Right ventricle myocardium inferior (tissue), 1 donor: ENCODE measurements at regions of chr1 and their contacts with region 1.

Region 1: GRCh38 chr1:11641776-11642305 is 12.4 kb downstream of the FBXO2 start:
- DNase-seq: no peak
- ATAC-seq: no peak

Region 2: DNA sequence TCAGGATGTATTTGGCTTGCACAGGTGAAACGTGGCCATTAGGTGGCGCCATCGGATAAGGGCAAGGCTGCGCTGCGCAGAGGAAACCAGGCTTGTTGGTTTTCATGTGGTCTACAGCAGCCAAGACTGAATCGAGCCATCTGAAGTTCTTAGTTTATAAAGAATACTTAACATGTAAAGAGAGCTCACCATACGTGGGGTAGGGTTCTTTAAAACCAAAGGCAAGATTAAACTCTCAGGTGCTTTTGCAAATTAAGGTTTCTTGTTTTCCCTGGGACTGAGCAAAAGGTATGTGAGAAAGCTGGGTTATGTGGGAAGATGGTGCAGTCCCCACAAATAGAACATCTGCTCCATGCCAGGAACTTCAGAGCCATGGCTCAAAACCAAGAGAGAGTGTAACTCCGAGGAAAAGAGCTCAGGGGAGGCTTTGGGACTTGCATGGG is 604.1 kb before region 1 on chr1:
- intact Hi-C with region 1: loop called (anchors 1 kb)
- DNase-seq: peak; percentile 93
- ATAC-seq: peak; percentile 94

Region 3: DNA sequence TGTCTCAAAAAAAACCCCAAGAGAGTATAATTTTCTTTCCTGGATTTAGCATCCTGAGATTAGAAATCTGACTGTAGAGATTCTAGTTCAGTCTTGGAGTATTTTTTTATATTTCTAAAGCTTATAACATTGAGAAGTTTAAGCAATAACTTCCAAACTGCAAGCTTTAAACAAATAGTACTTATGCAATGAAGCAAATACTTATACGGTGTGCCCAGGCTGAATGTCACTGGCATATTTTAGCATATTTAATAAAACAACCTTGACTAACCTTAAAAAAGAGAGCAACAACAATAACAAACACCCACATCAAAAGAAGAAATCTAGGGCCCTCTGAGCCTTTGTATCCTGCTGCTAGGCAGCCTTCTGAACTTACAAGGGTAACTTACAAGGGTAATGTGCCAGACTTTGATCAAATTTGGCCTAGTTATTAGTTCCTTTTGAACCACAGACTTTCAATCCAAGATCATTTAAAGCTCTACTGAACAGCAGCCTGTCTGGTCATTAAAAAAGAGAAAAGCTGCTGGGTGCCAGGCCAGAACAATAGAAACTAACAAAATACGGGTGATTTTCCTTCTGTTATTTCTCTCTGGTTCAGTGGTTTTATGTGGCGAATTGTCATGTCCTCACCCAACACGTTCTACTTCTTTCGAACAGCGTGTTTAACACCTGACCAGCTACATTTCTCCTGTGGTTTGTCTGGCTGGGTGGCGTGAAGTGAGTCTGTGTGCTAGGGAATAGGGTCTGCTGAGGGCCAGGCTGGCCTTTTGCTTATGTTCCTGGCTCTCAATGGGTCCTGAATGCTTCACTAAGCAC is 395.7 kb before region 1 on chr1:
- intact Hi-C with region 1: loop called (anchors 2 kb)
- DNase-seq: no peak
- ATAC-seq: no peak

Region 4: DNA sequence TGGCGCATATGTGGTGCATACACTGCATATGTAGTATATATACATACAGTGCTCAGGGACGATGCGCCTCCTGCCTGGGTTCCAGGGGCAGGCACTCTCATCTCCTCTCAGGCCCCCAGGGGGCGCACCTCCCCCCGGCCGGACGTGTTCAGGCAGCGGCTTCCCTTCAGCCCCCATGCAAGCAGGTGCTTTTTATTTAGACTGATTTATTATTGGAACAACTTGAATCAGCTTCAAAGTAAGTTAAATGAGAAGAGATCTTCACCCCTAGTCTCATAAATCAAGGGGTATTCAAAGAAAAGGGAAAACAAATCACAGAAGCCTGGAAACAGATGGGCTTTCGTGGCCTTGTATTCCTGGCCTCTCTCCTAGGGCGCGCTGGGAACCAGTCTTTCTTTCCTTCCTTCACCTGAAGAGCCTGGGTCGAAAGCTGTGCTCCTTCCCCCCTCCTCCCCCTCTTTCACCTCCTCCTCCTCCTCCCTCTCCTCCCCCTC is 304.2 kb before region 1 on chr1:
- intact Hi-C with region 1: loop called (anchors 2 kb)
- DNase-seq: no peak
- ATAC-seq: no peak

Region 5: DNA sequence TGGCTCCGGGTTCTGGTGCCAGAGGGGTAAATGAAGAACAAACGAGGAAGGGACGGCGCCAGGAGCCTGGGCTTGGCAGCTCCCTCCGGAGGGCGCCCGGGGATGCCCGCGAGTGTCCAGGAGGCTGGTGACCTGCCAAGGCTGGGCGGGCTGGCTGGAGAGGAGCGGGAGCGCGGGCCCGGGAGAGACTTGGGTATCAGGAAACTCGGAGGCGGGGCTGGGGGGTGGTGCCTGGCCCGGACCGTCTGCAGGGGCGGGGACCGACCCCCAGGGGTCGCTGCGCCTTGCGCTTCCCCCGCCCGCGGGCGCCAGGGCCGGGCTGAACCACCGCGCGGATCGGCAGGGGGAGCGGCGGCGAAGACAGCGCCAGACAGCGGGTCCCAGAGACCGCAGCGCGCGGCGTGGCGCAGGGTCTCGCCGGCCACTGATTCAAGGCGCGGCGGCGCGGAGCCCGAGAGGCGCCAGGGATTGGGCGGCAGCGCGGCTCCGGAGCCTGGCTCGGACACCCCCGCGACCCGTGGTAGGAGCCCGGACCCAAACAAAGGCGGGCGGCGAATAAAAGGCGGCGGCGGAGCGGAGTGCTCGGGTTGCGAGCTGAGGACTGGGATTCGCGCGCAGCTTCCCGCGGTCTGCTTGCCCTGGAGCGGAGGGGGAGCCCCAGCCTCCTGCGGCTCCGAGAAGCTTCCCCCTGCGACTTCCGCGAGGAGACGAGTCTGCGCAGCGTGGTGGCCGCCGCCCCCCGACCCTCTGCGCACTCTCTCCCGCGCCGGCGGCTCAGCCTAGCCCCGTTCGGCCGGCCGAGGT is 163.1 kb before region 1 on chr1 and contains the start of gene DISP3:
- intact Hi-C with region 1: loop called (anchors 2 kb)
- DNase-seq: no peak
- ATAC-seq: peak; percentile 55
- total RNA-seq, gene DISP3: 0.08 TPM

Region 6: DNA sequence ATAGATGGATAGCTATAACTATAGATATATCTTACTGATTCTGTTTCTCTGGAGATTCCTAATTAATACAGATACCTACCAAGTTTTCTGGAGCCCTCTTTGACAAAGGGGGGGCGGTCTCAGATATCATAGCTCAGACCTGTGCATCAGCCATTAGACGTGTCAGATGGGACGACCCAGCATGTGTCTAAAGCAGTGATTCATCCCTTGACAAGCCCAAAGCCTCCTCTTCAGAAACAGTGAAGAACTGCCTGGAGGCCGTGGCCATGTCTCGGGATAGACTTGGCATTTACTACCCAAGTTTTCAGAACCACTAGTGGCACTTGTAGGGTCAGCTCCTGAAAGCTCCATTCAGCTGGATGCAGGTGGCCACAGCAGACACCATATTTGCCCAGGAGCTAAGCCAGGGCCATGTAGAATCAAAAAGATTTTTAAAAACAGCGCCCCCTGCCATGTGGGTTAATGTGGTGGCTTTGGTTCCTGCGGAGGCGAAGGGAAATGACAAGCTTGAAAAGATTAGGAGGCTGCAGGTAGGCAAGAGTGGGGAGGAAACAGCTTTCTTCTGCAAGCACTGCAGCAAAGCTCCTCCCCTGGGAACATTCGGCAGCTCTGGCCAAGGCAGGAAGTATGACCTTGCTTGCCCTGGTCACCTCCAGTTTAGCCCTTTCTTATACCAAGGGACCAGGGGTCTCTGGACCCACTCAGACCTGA is 69.8 kb before region 1 on chr1:
- intact Hi-C with region 1: no loop called
- DNase-seq: no peak
- ATAC-seq: no peak